CD4-positive, alpha-beta T cell (primary cell): ENCODE measurements at regions of chr11 and their contacts with region 1.

Region 1: GRCh38 chr11:117020869-117021564 is 77.2 kb downstream of the SIK3 start:
- DNase-seq: no peak
- ATAC-seq: no peak
- H3K4me3 ChIP-seq: no peak overlapping the region
- H3K4me3 Mint-ChIP-seq: no peak overlapping the region
- H3K27ac ChIP-seq: no peak overlapping the region
- H3K27ac Mint-ChIP-seq: no peak overlapping the region
- H3K4me1 ChIP-seq: peaks cover 47% of the 10 kb centered on the region
- H3K4me1 Mint-ChIP-seq: peaks cover 69% of the 10 kb centered on the region
- H3K27me3 ChIP-seq: no peaks in the 10 kb centered on the region
- H3K27me3 Mint-ChIP-seq: no peaks in the 10 kb centered on the region
- CTCF ChIP-seq: no peak

Region 2: DNA sequence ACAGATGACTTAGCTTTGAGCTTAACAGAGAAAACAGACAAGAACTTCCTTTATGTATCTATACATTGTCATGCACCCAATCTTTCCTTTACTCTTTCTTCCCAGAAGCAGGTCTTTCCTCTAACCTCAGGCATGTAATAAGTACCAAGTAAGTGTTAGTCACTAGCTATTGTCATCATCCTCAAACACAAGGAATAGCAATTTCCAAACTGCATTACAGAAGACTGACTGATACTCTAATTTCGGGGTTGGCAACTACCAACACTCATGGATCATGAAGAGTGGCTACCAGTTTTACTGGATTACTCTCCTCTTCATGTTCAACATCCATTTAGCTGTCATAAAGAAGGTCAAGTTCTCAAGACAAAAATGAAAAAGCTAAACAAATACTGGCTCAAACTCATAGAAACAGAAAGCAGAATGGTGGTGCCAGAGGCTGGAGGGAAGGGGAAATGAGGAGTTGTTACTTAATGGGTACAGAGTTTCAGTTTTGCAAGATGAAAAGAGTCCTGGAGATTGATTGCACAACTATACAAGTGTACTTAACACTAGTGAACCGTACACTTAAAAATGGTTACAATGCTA is 34.4 kb before region 1 on chr11:
- CTCF ChIA-PET with region 1: interaction called, 3 read pairs
- POLR2A ChIA-PET with region 1: interaction called, 3 read pairs
- intact Hi-C with region 1: loop called in 1 of 2 experiments (anchors 5 kb)
- DNase-seq: peak in 3 of 14 experiments; percentile 42 to 50 (median 48)
- ATAC-seq: peak; percentile 24
- H3K4me3 ChIP-seq: no peak overlapping the region
- H3K4me3 Mint-ChIP-seq: peak overlapping the region; percentile 7
- H3K27ac ChIP-seq: no peak overlapping the region
- H3K27ac Mint-ChIP-seq: no peak overlapping the region
- H3K4me1 ChIP-seq: peaks cover 21% of the 10 kb centered on the region
- H3K4me1 Mint-ChIP-seq: peaks cover 70% of the 10 kb centered on the region
- H3K27me3 ChIP-seq: no peaks in the 10 kb centered on the region
- H3K27me3 Mint-ChIP-seq: no peaks in the 10 kb centered on the region
- CTCF ChIP-seq: no peak

Region 3: GRCh38 chr11:117037279-117037974 is 16.4 kb after region 1 on chr11:
- CTCF ChIA-PET with region 1: interaction called, 3 read pairs
- POLR2A ChIA-PET with region 1: interaction called, 3 read pairs
- intact Hi-C with region 1: loop called in 1 of 2 experiments (anchors 2 kb)
- DNase-seq: peak in 3 of 14 experiments; percentile 37 to 42 (median 40)
- ATAC-seq: peak; percentile 26
- H3K4me3 ChIP-seq: no peak overlapping the region
- H3K4me3 Mint-ChIP-seq: peak overlapping the region; percentile 50
- H3K27ac ChIP-seq: peak overlapping the region in 1 of 2 donors; percentile 68
- H3K27ac Mint-ChIP-seq: peak overlapping the region; percentile 72
- H3K4me1 ChIP-seq: peaks cover 17% of the 10 kb centered on the region
- H3K4me1 Mint-ChIP-seq: peaks cover 72% of the 10 kb centered on the region
- H3K27me3 ChIP-seq: no peaks in the 10 kb centered on the region
- H3K27me3 Mint-ChIP-seq: no peaks in the 10 kb centered on the region
- CTCF ChIP-seq: no peak

Region 4: DNA sequence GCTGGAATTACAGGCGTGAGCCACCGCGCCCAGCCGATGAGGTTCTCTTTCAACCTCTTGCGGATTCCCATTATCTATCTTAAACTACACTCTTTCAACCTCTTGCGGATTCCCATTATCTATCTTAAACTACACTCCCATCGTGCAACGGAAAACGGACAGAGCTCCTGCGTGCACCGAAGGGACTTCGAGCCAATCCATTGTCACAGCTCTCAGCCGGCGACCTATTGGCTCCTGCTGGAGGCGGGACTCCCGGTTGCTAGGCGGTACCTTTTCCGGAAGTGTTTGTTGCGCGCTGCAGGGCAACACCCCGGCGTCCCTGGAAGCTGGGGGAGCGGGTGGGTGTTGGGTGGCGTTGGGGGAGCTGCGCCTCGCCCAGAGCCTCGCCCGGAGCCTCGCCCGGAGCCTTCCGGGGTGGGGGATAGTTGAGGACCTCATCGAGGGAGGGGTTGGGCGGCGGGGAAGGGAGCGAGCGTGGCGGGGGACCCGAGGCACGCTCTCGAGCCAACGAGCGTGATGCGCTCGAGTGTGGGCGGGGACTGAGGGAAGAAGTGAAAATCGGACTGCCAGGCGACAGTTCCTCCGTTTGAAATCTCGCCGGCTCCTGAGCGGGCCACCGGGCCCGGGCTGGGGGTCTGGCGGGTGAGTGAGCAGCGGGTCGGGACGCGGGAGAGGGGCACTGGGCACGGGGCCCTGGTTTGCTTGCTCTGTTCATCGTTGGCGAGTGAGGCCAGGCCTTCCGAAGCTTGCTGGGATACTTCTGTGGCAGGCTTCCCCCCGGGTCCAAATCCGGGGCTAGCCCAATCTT is 306.8 kb after region 1 on chr11 and contains the start of gene CEP164:
- CTCF ChIA-PET with region 1: no interaction called
- POLR2A ChIA-PET with region 1: no interaction called
- intact Hi-C with region 1: no loop called
- DNase-seq: peak; percentile 89 to 97 (median 92)
- ATAC-seq: peak; percentile 93
- H3K4me3 ChIP-seq: peak within 1 kb of the TSS; percentile 92
- H3K4me3 Mint-ChIP-seq: peak within 1 kb of the TSS; percentile 69
- H3K27ac ChIP-seq: peak within 1 kb of the TSS; percentile 68 to 92
- H3K27ac Mint-ChIP-seq: peak within 1 kb of the TSS; percentile 59
- H3K4me1 ChIP-seq: peaks cover 23% of the 10 kb centered on the region
- H3K4me1 Mint-ChIP-seq: peaks cover 9% of the 10 kb centered on the region
- H3K27me3 ChIP-seq: no peaks in the 10 kb centered on the region
- H3K27me3 Mint-ChIP-seq: no peaks in the 10 kb centered on the region
- CTCF ChIP-seq: no peak
- total RNA-seq, gene CEP164: 33.0 to 36.7 TPM